ENCODE measurements at regions of chr10 and their contacts with region 1.

Region 1: DNA sequence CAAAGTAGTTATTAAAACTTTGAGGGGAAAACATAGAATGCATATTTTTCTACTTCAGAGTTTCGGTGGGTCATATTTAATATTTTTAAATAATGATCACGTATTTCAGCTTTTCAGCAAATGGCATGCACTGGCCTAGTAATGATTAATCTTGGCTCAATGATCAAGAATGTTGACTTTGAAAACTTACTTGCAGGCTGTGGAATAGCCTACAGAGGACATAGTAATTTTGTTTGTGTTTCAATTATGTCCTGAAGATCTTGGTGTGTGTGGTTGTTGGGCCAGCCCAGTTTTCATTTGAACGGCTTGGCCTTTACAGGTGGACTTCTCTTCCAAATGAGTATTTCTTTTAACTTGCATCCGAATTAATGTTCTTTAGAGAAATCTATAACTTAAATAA is 35.1 kb downstream of the ADD3 start:
- DNase-seq: no peak
- H3K4me3 ChIP-seq: no peak overlapping the region
- H3K27ac ChIP-seq: no peak overlapping the region
- H3K4me1 ChIP-seq: no peaks in the 10 kb centered on the region
- H3K27me3 ChIP-seq: no peaks in the 10 kb centered on the region
- CTCF ChIP-seq: no peak

Region 2: GRCh38 chr10:109939315-109939961 is 103.5 kb before region 1 on chr10:
- CTCF ChIA-PET with region 1: interaction called, 10 read pairs
- POLR2A ChIA-PET with region 1: no interaction called
- intact Hi-C with region 1: no loop called
- DNase-seq: no peak
- H3K4me3 ChIP-seq: no peak overlapping the region
- H3K27ac ChIP-seq: no peak overlapping the region
- H3K4me1 ChIP-seq: no peaks in the 10 kb centered on the region
- H3K27me3 ChIP-seq: no peaks in the 10 kb centered on the region
- CTCF ChIP-seq: no peak

Region 3: DNA sequence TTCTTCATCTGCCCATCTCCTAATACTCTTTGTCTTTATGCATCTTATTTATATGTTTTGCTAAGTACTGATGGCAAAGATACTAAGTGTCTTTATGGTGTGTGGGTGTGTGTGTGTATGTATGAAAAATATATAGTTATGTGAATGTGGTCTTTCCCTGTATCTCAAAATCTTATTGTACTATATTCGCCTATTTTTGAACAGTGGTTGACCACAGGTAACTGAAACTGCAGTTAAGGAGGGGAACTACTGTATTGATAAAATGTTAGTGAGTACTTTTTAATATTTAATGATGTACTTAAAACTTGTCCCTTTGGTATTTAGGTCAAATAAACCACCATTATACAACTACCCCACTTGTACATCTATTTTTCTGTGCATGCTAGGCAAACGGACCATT is 50.8 kb after region 1 on chr10:
- CTCF ChIA-PET with region 1: no interaction called
- POLR2A ChIA-PET with region 1: no interaction called
- intact Hi-C with region 1: no loop called
- DNase-seq: no peak
- H3K4me3 ChIP-seq: no peak overlapping the region
- H3K27ac ChIP-seq: no peak overlapping the region
- H3K4me1 ChIP-seq: peaks cover 5% of the 10 kb centered on the region
- H3K27me3 ChIP-seq: no peaks in the 10 kb centered on the region
- CTCF ChIP-seq: no peak

Measured in A673 (cell line).